GM10248 (cell line): ENCODE measurements at regions of chr2 and their contacts with region 1.

Region 1: DNA sequence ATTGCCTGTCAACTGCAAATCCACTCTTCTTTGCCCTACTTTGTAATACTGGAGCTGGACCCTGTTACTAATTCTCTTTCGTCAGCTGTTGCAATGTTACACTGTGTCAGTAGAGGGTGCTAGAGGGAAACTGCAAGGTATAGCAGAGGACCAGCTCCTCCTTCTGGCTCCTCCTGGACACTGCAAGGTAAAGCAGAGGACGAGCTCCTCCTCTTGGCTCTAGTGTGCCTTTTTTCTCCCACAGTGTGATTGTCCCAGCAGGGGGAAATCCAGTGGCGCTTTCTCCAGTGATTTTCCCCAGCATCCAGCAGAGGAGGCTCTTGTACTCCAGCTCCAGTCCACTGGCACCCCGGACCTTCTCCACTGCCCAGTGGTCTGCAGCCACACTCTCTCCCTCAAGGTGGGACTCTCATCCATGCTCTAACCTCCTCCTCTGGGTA is 95.6 kb downstream of the CAPN13 start:
- DNase-seq: peak; percentile 81
- CTCF ChIP-seq: peak; percentile 100

Region 2: GRCh38 chr2:30146438-30147147 is 565.1 kb before region 1 on chr2 and contains the start of gene YPEL5:
- CTCF ChIA-PET with region 1: interaction called, 90 read pairs
- POLR2A ChIA-PET with region 1: no interaction called
- DNase-seq: peak; percentile 98
- CTCF ChIP-seq: no peak

Region 3: DNA sequence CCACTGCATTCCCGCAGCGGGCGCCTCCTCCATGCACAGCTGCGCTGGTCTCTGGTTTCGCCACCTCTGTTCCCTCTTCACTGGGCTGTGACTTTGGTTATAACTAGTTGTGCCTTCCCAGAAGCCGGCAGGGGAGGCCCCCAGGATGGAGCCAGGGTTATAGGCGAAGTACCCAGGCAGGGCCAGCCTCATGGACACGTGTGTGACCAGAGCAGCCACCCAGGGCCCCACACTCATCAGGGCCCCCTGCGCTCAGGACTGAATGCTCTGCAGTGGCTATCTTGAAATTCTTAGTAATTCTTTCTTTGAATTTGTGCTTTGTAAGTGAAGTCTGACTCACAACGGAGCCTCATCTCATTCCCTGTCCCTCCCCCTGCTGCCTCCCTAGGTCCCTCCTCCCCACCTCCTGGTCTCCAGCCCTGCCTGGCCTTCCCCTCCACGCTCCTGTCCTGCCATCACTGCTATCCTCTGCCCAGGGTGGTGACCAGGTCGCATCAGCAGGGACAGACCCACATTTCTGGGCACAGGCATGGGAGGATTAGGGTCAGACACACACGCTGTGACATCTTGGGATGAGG is 518.5 kb before region 1 on chr2:
- CTCF ChIA-PET with region 1: interaction called, 11 read pairs
- POLR2A ChIA-PET with region 1: no interaction called
- DNase-seq: no peak
- CTCF ChIP-seq: no peak

Region 4: GRCh38 chr2:30231212-30231995 is 480.3 kb before region 1 on chr2 and contains the start of gene LBH:
- CTCF ChIA-PET with region 1: interaction called, 11 read pairs
- POLR2A ChIA-PET with region 1: interaction called, 3 read pairs
- DNase-seq: peak; percentile 92
- CTCF ChIP-seq: peak; percentile 28

Region 5: DNA sequence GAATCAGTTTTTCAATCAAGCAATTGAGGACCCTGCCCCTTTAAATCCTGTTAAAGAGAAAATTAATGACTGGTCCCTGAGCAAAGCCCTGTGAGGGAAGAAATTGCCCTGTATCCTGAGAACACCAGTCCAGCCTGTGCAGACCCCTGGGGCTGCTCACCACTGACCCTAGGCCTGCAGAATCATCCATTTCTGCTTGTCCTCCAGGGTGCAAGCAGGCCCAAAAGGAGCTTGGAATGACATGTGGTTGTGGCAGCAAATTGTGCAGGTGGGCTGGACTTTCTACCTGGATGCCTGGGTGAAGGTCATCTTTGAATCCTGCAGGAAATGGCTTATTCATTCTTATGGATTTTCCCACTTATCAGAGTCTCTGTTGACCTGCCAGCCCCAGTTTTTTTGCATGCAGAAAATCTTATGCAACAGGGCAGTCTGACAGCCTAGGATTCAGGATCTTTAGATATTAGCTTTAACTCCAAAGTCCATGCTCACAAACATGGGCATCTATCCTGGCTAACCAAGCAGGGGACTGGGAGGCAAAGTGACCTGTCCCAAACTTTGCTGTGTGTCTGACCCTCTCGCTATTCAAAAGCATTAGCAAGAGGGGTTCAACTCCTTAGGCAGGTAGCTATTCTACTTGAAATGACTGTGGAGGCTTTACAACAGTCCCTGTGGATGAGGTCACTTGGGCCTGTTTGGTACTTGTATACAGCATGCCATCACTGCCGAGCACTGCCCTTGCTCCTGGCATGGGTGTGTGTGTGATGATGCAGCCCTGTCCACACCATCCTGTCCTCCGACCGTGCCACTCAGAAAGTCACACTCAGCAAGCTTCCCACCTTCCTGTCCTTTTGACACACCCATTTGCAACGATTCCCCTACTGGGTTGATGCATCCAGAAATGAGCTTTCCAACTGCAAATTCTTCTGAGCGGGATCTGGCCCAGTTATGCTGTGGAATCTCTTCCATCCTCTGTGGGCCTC is 10.3 kb after region 1 on chr2:
- CTCF ChIA-PET with region 1: interaction called, 39 read pairs
- POLR2A ChIA-PET with region 1: no interaction called
- DNase-seq: no peak
- CTCF ChIP-seq: no peak

Region 6: GRCh38 chr2:30915486-30915885 is 203.8 kb after region 1 on chr2:
- CTCF ChIA-PET with region 1: no interaction called
- POLR2A ChIA-PET with region 1: no interaction called
- DNase-seq: no peak
- CTCF ChIP-seq: peak; percentile 14

Region 7: GRCh38 chr2:31060397-31060796 is 348.7 kb after region 1 on chr2:
- CTCF ChIA-PET with region 1: no interaction called
- POLR2A ChIA-PET with region 1: no interaction called
- DNase-seq: no peak
- CTCF ChIP-seq: no peak

Region 8: GRCh38 chr2:31333527-31334183 is 622.0 kb after region 1 on chr2:
- CTCF ChIA-PET with region 1: interaction called, 216 read pairs
- POLR2A ChIA-PET with region 1: no interaction called
- DNase-seq: peak; percentile 72
- CTCF ChIP-seq: peak; percentile 90